Left cardiac atrium (tissue), 4 donors: ENCODE measurements at regions of chr6 and their contacts with region 1.

Region 1: DNA sequence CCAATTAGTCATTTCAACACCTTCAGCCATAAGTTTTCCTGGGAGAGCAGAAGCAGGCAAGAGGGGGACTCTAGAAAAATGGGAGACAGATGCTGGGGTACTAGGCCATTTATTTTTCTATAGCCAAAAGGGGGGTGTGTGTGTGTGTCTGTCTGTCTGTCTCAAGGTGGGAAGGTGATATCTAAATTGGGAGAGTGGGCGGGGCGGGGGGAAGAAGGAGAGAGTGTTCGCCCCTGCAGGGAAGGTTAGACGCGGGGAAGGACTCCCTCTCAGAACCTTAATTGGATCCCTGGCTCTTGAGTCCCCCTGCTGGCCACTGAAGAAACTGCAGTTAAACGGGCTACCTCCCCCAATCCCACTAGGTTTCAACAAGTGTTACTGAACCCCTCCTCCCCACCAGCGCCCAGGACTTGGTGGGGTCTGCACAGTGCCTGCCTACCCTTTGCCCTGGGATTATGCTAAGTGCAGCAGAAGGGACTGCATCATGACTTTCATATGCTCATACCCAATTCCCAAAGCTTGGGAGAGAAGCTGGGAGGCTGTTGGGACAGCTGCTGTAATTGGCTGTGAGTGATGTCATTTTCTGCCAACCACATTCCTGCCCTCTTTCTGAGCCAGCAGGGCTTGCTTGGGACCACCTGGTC is 45.8 kb downstream of the FOXP4 start:
- DNase-seq: peak; percentile 66
- ATAC-seq: peak; percentile 60 to 66

Region 2: GRCh38 chr6:41424370-41425058 is 167.5 kb before region 1 on chr6:
- intact Hi-C with region 1: loop called in 1 of 2 experiments (anchors 1 kb)
- DNase-seq: peak; percentile 82
- ATAC-seq: peak; percentile 22 to 23

Region 3: DNA sequence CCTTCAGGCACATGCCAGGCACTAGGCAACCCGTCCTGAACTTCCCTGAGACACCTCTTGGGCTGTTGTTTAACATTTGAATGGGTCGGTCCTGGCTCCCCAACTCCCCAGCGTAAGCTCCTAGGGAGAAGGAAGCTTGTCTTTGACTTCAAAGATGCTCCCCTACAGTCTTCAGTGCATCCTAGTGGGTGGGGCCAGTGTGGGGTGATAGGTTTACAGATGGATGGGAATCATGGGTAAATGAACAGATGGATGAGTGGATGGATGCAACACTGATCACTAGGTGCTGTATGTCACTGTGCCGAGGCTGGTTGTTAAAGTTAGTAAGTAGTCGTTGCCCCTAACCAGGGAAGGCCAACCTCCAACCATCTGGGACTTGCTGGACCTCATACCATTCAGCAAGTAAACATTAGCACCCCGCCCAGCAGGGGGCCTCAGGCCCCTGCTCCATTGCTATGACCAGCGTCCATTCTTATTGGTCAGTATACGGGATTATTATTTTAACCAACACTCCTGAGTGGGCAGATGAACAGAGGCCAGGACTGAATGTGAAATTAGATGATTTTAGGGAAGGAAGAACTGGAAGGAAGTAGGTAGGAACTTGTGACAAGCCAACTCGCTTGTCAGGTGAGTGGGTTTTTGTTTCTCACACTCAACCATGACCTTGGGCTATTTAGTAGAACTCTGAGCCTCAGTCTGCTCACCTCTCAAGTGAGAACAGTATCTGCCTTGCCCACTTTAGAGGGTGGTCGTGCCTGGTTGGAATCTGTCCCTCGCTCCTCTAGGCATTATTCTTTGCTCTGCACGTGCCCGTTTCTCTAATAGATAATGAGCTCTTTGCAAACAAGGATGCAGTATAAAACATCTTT is 128.7 kb before region 1 on chr6:
- intact Hi-C with region 1: loop called (anchors 1 to 2 kb)
- DNase-seq: peak; percentile 74
- ATAC-seq: peak; percentile 92 to 94

Region 4: GRCh38 chr6:41531591-41532582 is 60.1 kb before region 1 on chr6:
- intact Hi-C with region 1: no loop called
- DNase-seq: no peak
- ATAC-seq: peak in 1 of 2 donors; percentile 24